HCT116 (cell line): ENCODE measurements at regions of chr2 and their contacts with region 1.

Region 1: DNA sequence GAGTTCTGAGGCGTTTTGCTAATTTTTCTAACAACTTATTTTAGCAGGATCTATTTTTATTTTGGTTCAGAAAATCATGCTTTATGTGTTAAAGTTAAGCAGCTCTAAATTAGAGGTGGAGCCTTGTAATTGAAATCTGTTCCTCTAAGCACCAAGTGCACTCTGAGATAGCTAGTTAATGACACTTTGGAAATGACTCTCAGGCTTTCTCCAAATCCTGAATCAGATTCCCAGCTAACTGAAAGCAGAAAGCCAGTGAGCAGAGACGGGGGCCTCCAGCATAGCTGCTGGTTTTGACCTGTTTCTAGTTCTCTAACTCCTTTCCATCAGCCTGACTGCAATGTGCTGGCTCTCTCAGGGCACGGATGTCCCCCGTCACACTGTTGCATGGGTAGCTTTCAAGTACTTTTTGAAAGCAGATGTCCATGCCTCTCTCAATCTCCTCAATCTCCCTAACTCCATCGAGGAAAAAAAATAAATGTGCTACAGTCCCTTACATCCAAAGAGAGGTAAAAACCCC is 326.5 kb downstream of the SATB2 start:
- DNase-seq: no peak
- ATAC-seq: no peak
- H3K4me3 ChIP-seq: no peak overlapping the region
- H3K27ac ChIP-seq: no peak overlapping the region
- H3K4me1 ChIP-seq: no peaks in the 10 kb centered on the region
- H3K27me3 ChIP-seq: no peaks in the 10 kb centered on the region
- CTCF ChIP-seq: no peak
- POLR2A ChIP-seq: no peak
- RAD21 ChIP-seq: no peak

Region 2: DNA sequence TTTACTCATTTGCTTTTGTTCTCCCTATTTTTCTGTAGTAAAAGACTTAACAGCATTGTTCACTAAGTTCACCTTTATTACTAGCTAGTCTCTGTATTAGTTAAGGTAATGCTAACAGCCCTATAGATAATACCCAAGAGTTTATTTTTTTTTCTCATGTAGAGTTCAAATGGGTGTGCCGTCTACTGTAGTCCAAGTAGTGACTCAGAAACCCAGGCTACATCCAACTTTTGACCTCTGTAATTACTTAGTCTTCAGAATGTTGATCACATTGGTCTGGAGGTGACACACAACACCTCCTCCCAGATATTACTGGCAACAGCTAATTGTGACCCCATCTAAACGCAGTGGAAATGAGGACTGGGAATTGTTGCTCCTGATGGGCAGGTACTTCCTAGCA is 1670.1 kb before region 1 on chr2:
- CTCF ChIA-PET with region 1: no interaction called
- POLR2A ChIA-PET with region 1: no interaction called
- RAD21 ChIA-PET with region 1: no interaction called
- intact Hi-C with region 1: no loop called
- DNase-seq: no peak
- ATAC-seq: peak; percentile 42
- H3K4me3 ChIP-seq: no peak overlapping the region
- H3K27ac ChIP-seq: no peak overlapping the region
- H3K4me1 ChIP-seq: peaks cover 0 to 9% of the 10 kb centered on the region in 2 experiments; a peak in 2 of 4 replicates
- H3K27me3 ChIP-seq: no peaks in the 10 kb centered on the region
- CTCF ChIP-seq: no peak
- POLR2A ChIP-seq: no peak
- RAD21 ChIP-seq: no peak

Region 3: DNA sequence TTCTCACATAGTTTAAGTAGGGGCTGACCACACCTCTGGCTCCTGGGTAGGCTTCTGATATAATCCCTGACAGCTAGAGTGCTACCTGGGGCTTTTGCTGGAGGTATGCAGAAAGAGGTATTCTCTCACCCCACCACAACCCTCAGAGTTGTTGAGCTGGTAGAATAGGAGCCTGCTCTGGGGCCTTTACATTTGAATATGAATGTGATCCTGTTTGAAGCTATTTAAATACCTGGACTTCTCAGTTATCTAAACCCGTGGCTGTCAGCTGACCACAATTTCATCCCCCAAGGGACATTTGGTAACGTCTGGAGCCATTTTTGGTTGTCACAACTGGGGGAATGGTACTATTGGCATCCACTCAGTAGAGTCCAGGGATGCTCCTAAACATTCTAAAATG is 342.5 kb before region 1 on chr2:
- CTCF ChIA-PET with region 1: no interaction called
- POLR2A ChIA-PET with region 1: no interaction called
- RAD21 ChIA-PET with region 1: no interaction called
- intact Hi-C with region 1: no loop called
- DNase-seq: no peak
- ATAC-seq: no peak
- H3K4me3 ChIP-seq: no peak overlapping the region
- H3K27ac ChIP-seq: no peak overlapping the region
- H3K4me1 ChIP-seq: no peaks in the 10 kb centered on the region
- H3K27me3 ChIP-seq: no peaks in the 10 kb centered on the region; the same call in 1 of the 2 replicates
- CTCF ChIP-seq: no peak
- POLR2A ChIP-seq: no peak
- RAD21 ChIP-seq: no peak

Region 4: DNA sequence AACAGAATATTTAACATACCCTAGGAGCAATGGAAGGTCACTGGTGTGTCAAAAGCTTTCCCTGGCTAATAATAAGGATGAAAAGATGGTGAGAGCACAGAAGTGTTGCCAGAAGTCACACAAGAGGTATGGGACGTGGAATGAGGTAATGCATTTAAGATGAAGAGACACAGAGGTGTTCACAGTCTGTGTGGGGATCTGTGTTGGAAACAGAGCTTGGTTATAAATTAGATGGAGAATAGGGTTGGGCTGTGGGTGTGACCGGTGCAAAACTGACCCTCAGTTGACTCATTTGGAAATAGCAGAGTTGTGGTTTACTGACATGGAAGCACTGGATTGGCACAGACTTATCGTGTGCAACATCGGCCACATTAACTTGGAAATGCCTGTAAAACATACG is 45.9 kb before region 1 on chr2:
- CTCF ChIA-PET with region 1: no interaction called
- POLR2A ChIA-PET with region 1: no interaction called
- RAD21 ChIA-PET with region 1: no interaction called
- intact Hi-C with region 1: loop called (anchors 5 kb)
- DNase-seq: no peak
- ATAC-seq: no peak
- H3K4me3 ChIP-seq: no peak overlapping the region
- H3K27ac ChIP-seq: no peak overlapping the region
- H3K4me1 ChIP-seq: no peaks in the 10 kb centered on the region
- H3K27me3 ChIP-seq: peaks cover 5% of the 10 kb centered on the region
- CTCF ChIP-seq: no peak
- POLR2A ChIP-seq: no peak
- RAD21 ChIP-seq: no peak